H1 (cell line): ENCODE measurements at regions of chr1 and their contacts with region 1.

Region 1: DNA sequence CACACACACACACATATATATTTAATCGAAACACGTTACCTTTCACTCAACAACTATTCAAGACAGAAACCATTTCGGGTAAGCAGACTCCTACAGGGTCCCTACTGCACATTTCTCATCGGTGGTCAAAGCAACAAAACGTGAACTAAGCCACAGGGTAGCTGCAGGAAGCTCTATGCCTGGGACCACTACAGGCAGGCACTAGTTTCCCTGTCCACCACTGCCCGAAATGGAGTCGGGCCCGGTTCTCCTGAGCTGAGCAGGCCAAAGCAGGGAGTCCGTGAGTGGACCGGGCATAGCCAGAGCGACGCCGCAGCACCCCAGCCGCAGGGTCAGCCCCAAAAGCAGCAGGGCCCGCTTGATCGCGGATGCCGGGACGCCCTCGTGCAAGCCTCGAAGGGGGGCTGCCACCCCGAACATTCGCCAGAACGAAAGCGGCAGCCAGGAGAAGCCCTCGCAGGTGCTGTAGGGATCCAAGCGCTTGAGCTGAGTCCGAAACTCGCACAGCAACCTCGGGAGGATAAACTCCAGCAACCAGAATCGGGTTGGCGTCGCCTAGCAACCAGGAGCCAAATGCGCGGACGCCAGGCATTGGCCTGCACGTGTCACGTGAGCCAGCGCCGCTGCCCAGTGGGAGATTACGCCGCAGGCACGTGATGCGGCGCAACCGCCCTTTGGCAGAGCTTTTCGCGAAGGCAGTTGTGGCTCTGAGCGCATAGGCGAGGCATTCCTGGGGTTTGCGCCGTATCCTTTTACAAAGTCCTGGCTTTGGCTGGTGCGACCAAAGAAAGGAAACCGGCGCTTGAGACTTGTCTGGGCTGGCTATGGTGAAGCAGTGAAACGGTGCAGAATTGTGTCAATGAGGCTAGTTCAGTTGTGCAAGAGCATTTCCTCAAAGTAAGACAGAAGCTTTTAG is 13.9 kb upstream of the DDI2 start:
- DNase-seq: peak; percentile 81 to 96
- H3K4me3 ChIP-seq: peak overlapping the region; percentile 52 to 75 (median 63)
- H3K27ac ChIP-seq: no peak overlapping the region
- H3K4me1 ChIP-seq: peaks cover 0 to 7% (median 4%) of the 10 kb centered on the region in 4 experiments; a peak in 3 of 7 replicates
- H3K27me3 ChIP-seq: peaks cover 2 to 11% (median 9%) of the 10 kb centered on the region in 4 experiments
- CTCF ChIP-seq: no peak
- EP300 ChIP-seq: no peak
- POLR2A ChIP-seq: 0 out of 3 replicates have a peak, but pooled peaks of 1 of the 2 experiments have one; percentile 34
- RAD21 ChIP-seq: no peak

Region 2: GRCh38 chr1:15538770-15539169 is 64.5 kb before region 1 on chr1:
- CTCF ChIA-PET with region 1: no interaction called
- POLR2A ChIA-PET with region 1: no interaction called
- DNase-seq: no peak
- H3K4me3 ChIP-seq: no peak overlapping the region
- H3K27ac ChIP-seq: no peak overlapping the region
- H3K4me1 ChIP-seq: no peaks in the 10 kb centered on the region
- H3K27me3 ChIP-seq: no peaks in the 10 kb centered on the region
- CTCF ChIP-seq: no peak
- EP300 ChIP-seq: no peak
- POLR2A ChIP-seq: no peak
- RAD21 ChIP-seq: no peak

Region 3: DNA sequence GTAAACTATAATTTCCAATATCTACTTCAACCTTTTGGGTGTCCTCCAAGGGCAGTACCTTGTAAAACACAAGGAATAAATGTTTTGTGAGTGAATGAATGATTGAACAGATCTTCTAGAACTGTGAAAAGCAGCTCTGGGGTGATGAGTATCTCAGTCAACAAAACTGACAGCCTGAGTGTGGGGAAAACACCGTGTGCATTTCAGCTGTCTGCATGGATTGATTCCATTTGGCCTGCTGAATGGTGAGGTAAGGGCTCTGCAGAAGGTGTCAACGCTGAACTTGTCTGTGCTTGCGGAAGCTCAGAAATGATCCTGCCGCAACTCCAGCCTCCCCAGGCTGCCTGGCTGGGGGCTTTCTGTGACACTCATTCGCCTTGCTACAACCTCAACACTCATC is 11.0 kb before region 1 on chr1:
- CTCF ChIA-PET with region 1: interaction called, 4 read pairs
- POLR2A ChIA-PET with region 1: interaction called, 11 read pairs
- DNase-seq: no peak
- H3K4me3 ChIP-seq: no peak overlapping the region
- H3K27ac ChIP-seq: no peak overlapping the region
- H3K4me1 ChIP-seq: peaks cover 0 to 5% (median 1%) of the 10 kb centered on the region in 4 experiments; a peak in 2 of 7 replicates
- H3K27me3 ChIP-seq: no peaks in the 10 kb centered on the region
- CTCF ChIP-seq: no peak
- EP300 ChIP-seq: no peak
- POLR2A ChIP-seq: no peak
- RAD21 ChIP-seq: no peak

Region 4: DNA sequence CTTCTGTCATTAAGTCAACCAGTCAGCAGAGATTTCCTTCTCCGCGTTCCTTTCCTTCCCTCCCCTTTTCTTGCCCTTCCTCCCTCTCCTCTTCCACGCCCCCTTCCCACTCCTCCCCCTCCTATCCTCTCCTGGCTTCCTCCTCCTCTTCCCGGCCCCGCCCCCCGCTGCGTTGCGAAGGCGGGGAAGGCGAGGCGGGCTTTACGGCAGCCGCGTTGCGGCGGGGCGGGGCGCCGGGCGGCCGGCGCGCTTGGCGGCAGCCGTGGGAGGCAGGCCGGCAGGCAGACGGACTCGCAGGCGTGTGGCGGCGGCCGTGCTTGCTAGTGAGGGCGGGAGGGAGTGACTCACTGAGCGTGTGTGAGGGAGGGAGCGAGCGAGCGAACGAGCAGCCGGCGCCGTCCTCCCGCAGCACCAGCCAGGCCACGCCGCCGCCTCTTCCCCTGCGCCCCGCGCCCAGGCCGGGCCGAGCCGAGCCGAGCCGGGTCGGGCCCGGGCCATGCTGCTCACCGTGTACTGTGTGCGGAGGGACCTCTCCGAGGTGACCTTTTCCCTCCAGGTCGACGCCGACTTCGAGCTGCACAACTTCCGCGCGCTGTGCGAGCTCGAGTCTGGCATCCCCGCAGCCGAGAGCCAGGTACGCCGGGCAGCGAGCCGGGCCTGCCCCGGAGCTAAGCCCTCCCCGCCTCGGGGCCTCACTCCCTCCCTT is 14.0 kb after region 1 on chr1 and contains the start of gene DDI2:
- CTCF ChIA-PET with region 1: interaction called, 8 read pairs
- POLR2A ChIA-PET with region 1: interaction called, 37 read pairs
- DNase-seq: peak; percentile 89 to 94
- H3K4me3 ChIP-seq: peak within 1 kb of the TSS; percentile 71 to 97 (median 85)
- H3K27ac ChIP-seq: peak within 1 kb of the TSS; percentile 75
- H3K4me1 ChIP-seq: peaks cover 0 to 5% (median 0%) of the 10 kb centered on the region in 4 experiments; a peak in 1 of 7 replicates
- H3K27me3 ChIP-seq: no peaks in the 10 kb centered on the region
- CTCF ChIP-seq: no peak
- EP300 ChIP-seq: no peak
- POLR2A ChIP-seq: peak; percentile 61 to 79
- RAD21 ChIP-seq: no peak
- total RNA-seq, gene DDI2: 38.3 and 39.3 TPM in 2 replicates

Region 5: GRCh38 chr1:15741183-15741850 is 138.0 kb after region 1 on chr1:
- CTCF ChIA-PET with region 1: interaction called, 13 read pairs
- POLR2A ChIA-PET with region 1: no interaction called
- DNase-seq: peak; percentile 61 to 91
- H3K4me3 ChIP-seq: no peak overlapping the region
- H3K27ac ChIP-seq: no peak overlapping the region
- H3K4me1 ChIP-seq: peaks cover 0 to 20% (median 6%) of the 10 kb centered on the region in 4 experiments; a peak in 5 of 7 replicates
- H3K27me3 ChIP-seq: no peaks in the 10 kb centered on the region
- CTCF ChIP-seq: peak in 2 of 3 experiments; percentile 91 to 98; a peak in 3 of 4 replicates
- EP300 ChIP-seq: no peak
- POLR2A ChIP-seq: no peak
- RAD21 ChIP-seq: peak; percentile 94 to 97